ENCODE measurements at regions of chr17 and their contacts with region 1.

Region 1: GRCh38 chr17:66990047-66990446 is 25.5 kb downstream of the CACNG4 start:
- DNase-seq: no peak
- ATAC-seq: no peak
- H3K4me3 Mint-ChIP-seq: no peak overlapping the region
- H3K27ac Mint-ChIP-seq: no peak overlapping the region
- H3K4me1 Mint-ChIP-seq: peaks cover 3% of the 10 kb centered on the region
- H3K27me3 Mint-ChIP-seq: peaks cover 15% of the 10 kb centered on the region

Region 2: DNA sequence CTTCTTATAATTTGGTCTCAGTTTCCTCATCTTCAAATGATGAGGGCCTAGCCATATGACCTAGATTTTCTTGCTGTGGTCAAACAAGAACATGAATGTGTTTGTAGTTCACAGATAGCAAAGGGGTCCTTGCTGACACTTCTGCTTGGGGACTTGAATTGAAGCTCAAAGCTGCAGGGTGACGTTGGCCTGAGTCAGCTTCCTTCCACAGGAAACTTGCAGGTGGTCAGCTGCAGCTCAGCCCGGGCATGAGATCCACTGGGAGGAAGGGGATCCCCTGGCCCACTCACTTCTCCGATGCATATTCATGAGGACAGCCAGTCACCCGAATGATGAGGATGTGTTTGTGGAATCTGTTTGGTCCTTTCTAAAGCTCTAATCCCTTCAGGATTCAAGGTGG is 1386.0 kb before region 1 on chr17:
- CTCF ChIA-PET with region 1: no interaction called
- POLR2A ChIA-PET with region 1: no interaction called
- intact Hi-C with region 1: loop called in 1 of 2 experiments (anchors 5 kb)
- DNase-seq: no peak
- ATAC-seq: no peak
- H3K4me3 Mint-ChIP-seq: no peak overlapping the region
- H3K27ac Mint-ChIP-seq: no peak overlapping the region
- H3K4me1 Mint-ChIP-seq: peaks cover 3% of the 10 kb centered on the region
- H3K27me3 Mint-ChIP-seq: no peaks in the 10 kb centered on the region